Activated B cell treated with CpG ODN at 0.5 μM for 24 hours (primary cell): ENCODE measurements at regions of chr2 and their contacts with region 1.

Region 1: GRCh38 chr2:88831792-88832248 is 140.3 kb downstream of the RPIA start:
- DNase-seq: peak; percentile 72
- ATAC-seq: peak; percentile 80
- H3K4me3 Mint-ChIP-seq: peak overlapping the region; percentile 84
- H3K27ac Mint-ChIP-seq: peak overlapping the region; percentile 92
- H3K4me1 Mint-ChIP-seq: peaks cover 68% of the 10 kb centered on the region
- H3K27me3 Mint-ChIP-seq: no peaks in the 10 kb centered on the region
- CTCF ChIP-seq: peak; percentile 81

Region 2: DNA sequence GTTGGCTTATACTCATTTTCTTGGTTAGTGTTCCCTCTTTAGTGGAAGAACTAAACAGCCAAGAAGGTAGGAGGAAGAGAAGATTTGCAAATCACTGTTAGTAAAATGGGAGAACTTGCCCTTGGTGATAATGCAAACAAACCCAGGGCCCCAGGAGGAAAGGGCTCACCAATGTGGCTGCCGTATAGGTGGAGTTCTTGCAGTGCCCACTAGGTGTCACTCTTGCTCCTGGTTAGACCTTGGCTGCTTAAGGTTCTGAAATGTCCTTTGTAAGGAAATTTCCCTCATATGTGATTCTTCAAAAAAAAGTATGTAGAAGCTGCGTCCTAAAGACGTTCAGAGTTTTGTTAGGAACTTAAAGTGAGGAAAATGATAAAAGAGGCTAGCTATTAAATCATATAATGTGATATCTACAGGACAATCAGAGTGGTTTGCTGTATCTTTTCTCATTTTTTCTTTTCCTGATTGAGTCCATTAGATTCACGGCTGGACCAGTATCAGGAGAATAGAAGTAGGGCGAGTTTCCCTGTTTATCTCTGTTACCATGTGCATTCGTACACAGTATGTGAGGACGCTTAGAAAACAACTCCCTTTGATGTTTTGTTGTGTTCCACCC is 91.7 kb before region 1 on chr2:
- CTCF ChIA-PET with region 1: interaction called, 16 read pairs
- POLR2A ChIA-PET with region 1: interaction called, 5 read pairs
- intact Hi-C with region 1: loop called (anchors 5 kb)
- DNase-seq: peak; percentile 62
- ATAC-seq: peak; percentile 96
- H3K4me3 Mint-ChIP-seq: no peak overlapping the region
- H3K27ac Mint-ChIP-seq: peak overlapping the region; percentile 26
- H3K4me1 Mint-ChIP-seq: peaks cover 6% of the 10 kb centered on the region
- H3K27me3 Mint-ChIP-seq: no peaks in the 10 kb centered on the region
- CTCF ChIP-seq: peak; percentile 77

Region 3: GRCh38 chr2:88845772-88846661 is 14.2 kb after region 1 on chr2:
- CTCF ChIA-PET with region 1: interaction called, 16 read pairs
- POLR2A ChIA-PET with region 1: interaction called, 1,820 read pairs
- intact Hi-C with region 1: loop called (anchors 2 kb)
- DNase-seq: peak; percentile 50
- ATAC-seq: peak; percentile 88
- H3K4me3 Mint-ChIP-seq: peak overlapping the region; percentile 55
- H3K27ac Mint-ChIP-seq: peak overlapping the region; percentile 97
- H3K4me1 Mint-ChIP-seq: peaks cover 98% of the 10 kb centered on the region
- H3K27me3 Mint-ChIP-seq: no peaks in the 10 kb centered on the region
- CTCF ChIP-seq: no peak

Region 4: DNA sequence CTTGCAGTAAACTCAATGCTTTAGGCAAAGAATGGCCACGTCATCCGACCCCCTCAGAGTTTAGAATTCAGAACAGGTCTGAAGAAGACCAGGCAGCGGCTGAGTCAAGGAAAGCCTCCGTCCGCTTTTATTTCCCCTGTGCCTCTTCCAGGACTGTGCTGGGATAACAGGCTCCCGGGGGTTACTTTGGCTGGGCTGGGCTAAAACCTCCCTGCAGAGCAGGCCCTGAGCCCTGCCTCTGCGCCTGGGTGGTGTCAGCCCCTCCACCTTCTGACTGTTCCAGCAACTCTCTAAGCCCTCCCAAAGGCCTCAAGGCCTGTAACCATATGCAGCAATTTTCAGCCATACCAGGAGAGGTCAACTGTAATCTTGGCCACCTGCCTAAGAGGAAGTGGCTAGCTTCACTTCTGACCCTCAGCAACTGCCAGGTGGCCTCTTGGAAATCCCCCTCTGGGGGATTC is 26.2 kb after region 1 on chr2:
- CTCF ChIA-PET with region 1: interaction called, 187 read pairs
- POLR2A ChIA-PET with region 1: interaction called, 1,820 read pairs
- intact Hi-C with region 1: loop called (anchors 1 kb)
- DNase-seq: peak; percentile 39
- ATAC-seq: peak; percentile 43
- H3K4me3 Mint-ChIP-seq: peak overlapping the region; percentile 97
- H3K27ac Mint-ChIP-seq: peak overlapping the region; percentile 98
- H3K4me1 Mint-ChIP-seq: peaks cover 54% of the 10 kb centered on the region
- H3K27me3 Mint-ChIP-seq: no peaks in the 10 kb centered on the region
- CTCF ChIP-seq: no peak

Region 5: DNA sequence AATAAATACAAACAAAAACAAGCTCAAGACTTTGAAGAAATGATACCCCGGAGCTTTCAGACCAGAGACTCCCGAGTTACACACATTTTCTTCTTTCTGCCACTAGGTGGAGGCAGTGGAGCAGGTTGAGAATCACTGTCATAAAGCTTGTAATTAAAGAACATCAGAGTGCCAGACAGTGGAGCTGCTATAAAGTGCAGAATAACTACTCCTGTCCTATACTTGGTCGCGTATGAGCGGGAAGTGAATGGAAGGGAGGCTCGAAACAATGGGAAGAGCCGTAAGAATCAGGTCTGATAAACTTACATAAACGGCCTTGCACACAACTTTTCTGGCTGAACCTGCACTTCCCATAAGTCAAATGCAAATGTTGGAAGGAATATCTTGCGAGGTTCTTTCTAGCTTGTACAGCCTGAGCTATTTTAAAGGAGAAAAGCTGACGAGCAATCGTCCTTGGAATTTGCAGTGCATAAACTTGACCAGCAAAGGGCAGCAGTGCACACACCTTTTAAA is 48.7 kb after region 1 on chr2:
- CTCF ChIA-PET with region 1: interaction called, 80 read pairs
- POLR2A ChIA-PET with region 1: interaction called, 33 read pairs
- intact Hi-C with region 1: loop called (anchors 1 kb)
- DNase-seq: no peak
- ATAC-seq: peak; percentile 75
- H3K4me3 Mint-ChIP-seq: peak overlapping the region; percentile 74
- H3K27ac Mint-ChIP-seq: peak overlapping the region; percentile 84
- H3K4me1 Mint-ChIP-seq: peaks cover 70% of the 10 kb centered on the region
- H3K27me3 Mint-ChIP-seq: no peaks in the 10 kb centered on the region
- CTCF ChIP-seq: no peak

Region 6: GRCh38 chr2:88950010-88950409 is 118.2 kb after region 1 on chr2:
- CTCF ChIA-PET with region 1: no interaction called
- POLR2A ChIA-PET with region 1: no interaction called
- intact Hi-C with region 1: loop called (anchors 1 kb)
- DNase-seq: no peak
- ATAC-seq: no peak
- H3K4me3 Mint-ChIP-seq: no peak overlapping the region
- H3K27ac Mint-ChIP-seq: no peak overlapping the region
- H3K4me1 Mint-ChIP-seq: peaks cover 6% of the 10 kb centered on the region
- H3K27me3 Mint-ChIP-seq: peaks cover 2% of the 10 kb centered on the region
- CTCF ChIP-seq: no peak

Region 7: DNA sequence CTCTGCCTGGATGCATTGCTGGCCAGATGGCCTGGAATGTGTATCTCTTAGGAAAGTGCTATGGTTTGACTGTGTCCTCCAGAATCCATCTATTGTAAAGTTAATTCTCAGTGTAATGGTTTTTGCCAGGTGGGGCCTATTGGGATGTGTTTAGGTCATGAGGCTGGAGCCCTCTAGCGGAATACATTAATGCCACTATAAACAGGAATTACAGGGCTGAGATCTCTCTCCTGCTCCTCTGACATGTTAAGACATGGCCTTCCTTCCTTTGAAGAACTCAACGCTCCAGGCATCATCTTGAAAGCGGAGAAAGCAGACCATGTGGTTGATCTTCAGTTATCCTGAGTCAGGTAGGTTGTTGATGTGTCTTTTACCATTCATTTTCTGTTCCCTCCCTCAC is 136.0 kb after region 1 on chr2:
- CTCF ChIA-PET with region 1: no interaction called
- POLR2A ChIA-PET with region 1: no interaction called
- intact Hi-C with region 1: no loop called
- DNase-seq: no peak
- ATAC-seq: no peak
- H3K4me3 Mint-ChIP-seq: no peak overlapping the region
- H3K27ac Mint-ChIP-seq: no peak overlapping the region
- H3K4me1 Mint-ChIP-seq: peaks cover 8% of the 10 kb centered on the region
- H3K27me3 Mint-ChIP-seq: no peaks in the 10 kb centered on the region
- CTCF ChIP-seq: no peak